ENCODE measurements at regions of chr3 and their contacts with region 1.

Region 1: GRCh38 chr3:9779721-9780457 is 10.1 kb upstream of the CAMK1 start:
- DNase-seq: peak; percentile 47
- H3K4me3 Mint-ChIP-seq: no peak overlapping the region
- H3K27ac Mint-ChIP-seq: peak overlapping the region; percentile 91
- H3K4me1 Mint-ChIP-seq: peaks cover 56% of the 10 kb centered on the region
- H3K27me3 Mint-ChIP-seq: no peaks in the 10 kb centered on the region

Region 2: GRCh38 chr3:9749645-9750555 is 30.0 kb before region 1 on chr3 and contains the start of gene OGG1:
- CTCF ChIA-PET with region 1: interaction called, 7 read pairs
- intact Hi-C with region 1: loop called (anchors 1 kb)
- DNase-seq: peak; percentile 98
- H3K4me3 Mint-ChIP-seq: peak within 1 kb of the TSS; percentile 97
- H3K27ac Mint-ChIP-seq: peak within 1 kb of the TSS; percentile 94
- H3K4me1 Mint-ChIP-seq: peaks cover 50% of the 10 kb centered on the region
- H3K27me3 Mint-ChIP-seq: no peaks in the 10 kb centered on the region
- total RNA-seq, gene OGG1: 26.1 to 28.5 TPM

Region 3: DNA sequence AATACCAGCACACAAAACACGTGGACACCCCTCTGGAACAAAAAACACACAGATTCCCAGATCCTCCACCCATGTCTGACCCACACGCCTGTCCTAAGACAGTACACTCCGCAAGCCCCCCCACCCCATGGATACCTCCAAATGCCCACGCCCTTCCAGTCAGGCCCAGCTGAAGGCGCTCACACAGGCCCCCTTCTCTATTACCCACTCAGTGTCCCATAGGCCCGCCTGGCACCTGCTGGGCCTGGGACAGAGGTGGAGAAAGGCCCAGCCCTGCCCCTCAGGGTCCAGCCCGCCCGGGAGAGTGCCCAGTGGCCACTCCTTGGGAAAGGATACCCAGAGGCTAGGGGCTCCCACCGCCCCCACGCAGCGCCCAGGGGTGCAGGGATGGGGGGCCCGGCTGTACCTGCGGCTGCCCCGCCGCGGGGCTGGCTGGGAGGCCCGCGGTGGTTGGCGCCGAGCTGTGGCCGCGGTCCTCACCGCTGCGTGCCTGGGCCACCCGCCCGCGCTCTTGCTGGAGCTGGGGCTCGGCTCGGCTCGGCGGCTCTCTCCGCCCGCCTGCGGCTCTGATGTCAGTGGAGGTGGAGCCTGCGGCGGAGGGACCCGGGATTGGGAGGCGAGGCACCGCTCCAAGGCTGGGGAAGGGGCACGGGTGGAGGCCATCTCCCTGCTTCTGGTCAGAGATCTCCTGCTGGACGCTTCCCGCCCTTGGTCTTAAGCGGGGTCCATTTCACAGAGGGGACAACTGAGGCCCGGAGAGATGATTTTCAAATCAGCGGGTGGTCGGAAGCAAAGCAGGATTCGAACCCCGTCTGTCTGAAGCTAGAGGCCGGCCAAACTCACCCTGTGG is 10.2 kb before region 1 on chr3 and contains the start of gene CAMK1:
- CTCF ChIA-PET with region 1: interaction called, 3 read pairs
- intact Hi-C with region 1: loop called (anchors 1 kb)
- DNase-seq: peak; percentile 79
- H3K4me3 Mint-ChIP-seq: peak within 1 kb of the TSS; percentile 75
- H3K27ac Mint-ChIP-seq: peak within 1 kb of the TSS; percentile 0
- H3K4me1 Mint-ChIP-seq: peaks cover 15% of the 10 kb centered on the region
- H3K27me3 Mint-ChIP-seq: no peaks in the 10 kb centered on the region
- total RNA-seq, gene CAMK1: 18.9 to 19.5 TPM

Region 4: DNA sequence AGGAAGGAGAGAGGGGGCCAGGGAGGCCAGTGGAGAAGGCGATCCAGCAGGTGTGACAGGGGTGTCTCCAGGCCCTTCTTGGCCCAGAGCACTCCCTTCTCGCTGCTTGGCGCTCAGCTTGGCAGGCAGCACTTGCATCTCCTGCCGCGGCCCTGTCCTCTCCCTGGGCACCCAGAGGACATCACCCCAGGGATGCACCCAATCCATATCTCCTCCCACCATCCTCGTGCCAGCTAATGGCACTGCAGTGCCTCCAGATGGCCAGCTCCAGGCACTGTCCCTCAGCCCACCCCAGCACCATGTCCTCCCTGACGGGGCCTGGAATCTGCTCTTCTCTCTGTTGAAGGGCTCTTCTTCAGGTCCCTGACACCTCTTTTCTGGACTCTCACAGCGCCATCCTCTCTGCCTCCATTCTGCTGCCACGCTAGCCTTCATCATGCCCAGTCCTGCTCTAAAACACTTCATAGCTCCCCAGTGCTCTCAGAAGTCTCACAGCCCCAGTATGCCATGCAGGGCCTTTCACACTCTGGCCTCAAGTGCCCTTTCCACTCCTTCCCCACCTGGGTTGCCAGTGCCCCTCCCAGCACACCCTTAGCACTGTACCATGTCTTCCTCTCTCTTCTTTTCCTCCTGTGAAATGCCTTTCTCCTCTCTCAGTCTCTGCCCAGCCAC is 929.4 kb after region 1 on chr3:
- CTCF ChIA-PET with region 1: no interaction called
- intact Hi-C with region 1: no loop called
- DNase-seq: no peak
- H3K4me3 Mint-ChIP-seq: no peak overlapping the region
- H3K27ac Mint-ChIP-seq: no peak overlapping the region
- H3K4me1 Mint-ChIP-seq: peaks cover 5% of the 10 kb centered on the region
- H3K27me3 Mint-ChIP-seq: peaks cover 45% of the 10 kb centered on the region